Right lobe of liver (tissue), 6 donors: ENCODE measurements at regions of chr10 and their contacts with region 1.

Region 1: GRCh38 chr10:58177362-58177947 is 90.2 kb downstream of the IPMK start:
- DNase-seq: no peak
- ATAC-seq: peak; percentile 59 to 76 (median 74)
- H3K4me3 ChIP-seq: no peak overlapping the region
- H3K27ac ChIP-seq: no peak overlapping the region
- H3K4me1 ChIP-seq: no peaks in the 10 kb centered on the region
- H3K27me3 ChIP-seq: no peaks in the 10 kb centered on the region
- CTCF ChIP-seq: peak; percentile 66 to 75 (median 71)
- POLR2A ChIP-seq: no peak

Region 2: DNA sequence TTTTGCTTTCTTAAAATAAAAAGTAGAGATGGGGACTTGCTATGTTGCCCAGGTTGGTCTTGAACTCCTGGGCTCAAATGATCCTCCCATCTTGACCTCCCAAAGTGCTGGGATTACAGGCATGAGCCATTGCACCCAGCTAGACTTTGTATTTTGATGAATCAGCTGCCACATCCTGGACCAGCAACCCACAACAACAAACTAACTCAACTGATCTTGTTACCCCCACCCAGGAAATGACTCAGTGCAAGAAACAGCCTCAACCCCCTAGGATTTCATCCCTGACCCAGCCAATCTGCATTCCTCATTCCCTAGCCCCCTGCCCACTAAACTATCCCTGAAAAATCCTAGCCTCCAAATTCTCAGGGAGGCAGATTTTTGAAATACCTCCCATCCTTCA is 33.5 kb before region 1 on chr10:
- intact Hi-C with region 1: no loop called
- DNase-seq: no peak
- ATAC-seq: no peak
- H3K4me3 ChIP-seq: no peak overlapping the region
- H3K27ac ChIP-seq: no peak overlapping the region
- H3K4me1 ChIP-seq: no peaks in the 10 kb centered on the region
- H3K27me3 ChIP-seq: no peaks in the 10 kb centered on the region
- CTCF ChIP-seq: no peak
- POLR2A ChIP-seq: no peak

Region 3: DNA sequence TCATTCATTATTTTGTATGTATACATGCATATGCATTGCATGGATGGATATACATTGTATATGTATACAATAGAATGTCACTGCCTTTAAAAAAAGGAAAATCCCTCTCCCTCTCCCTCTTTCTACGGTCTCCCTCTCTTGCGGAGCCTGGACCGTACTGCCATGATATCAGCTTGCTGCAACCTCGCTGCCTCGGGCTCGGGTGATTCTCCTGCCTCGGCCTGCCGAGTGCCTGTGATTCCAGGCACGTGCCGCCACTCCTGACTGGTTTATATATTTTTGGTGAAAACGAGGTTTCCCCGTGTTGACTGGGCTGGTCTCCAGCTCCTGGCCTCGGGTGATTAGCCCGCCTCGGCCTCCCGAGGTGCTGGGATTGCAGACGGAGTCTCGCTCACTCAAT is 65.8 kb after region 1 on chr10:
- intact Hi-C with region 1: no loop called
- DNase-seq: no peak
- ATAC-seq: no peak
- H3K4me3 ChIP-seq: no peak overlapping the region
- H3K27ac ChIP-seq: no peak overlapping the region
- H3K4me1 ChIP-seq: no peaks in the 10 kb centered on the region
- H3K27me3 ChIP-seq: no peaks in the 10 kb centered on the region
- CTCF ChIP-seq: no peak
- POLR2A ChIP-seq: no peak

Region 4: DNA sequence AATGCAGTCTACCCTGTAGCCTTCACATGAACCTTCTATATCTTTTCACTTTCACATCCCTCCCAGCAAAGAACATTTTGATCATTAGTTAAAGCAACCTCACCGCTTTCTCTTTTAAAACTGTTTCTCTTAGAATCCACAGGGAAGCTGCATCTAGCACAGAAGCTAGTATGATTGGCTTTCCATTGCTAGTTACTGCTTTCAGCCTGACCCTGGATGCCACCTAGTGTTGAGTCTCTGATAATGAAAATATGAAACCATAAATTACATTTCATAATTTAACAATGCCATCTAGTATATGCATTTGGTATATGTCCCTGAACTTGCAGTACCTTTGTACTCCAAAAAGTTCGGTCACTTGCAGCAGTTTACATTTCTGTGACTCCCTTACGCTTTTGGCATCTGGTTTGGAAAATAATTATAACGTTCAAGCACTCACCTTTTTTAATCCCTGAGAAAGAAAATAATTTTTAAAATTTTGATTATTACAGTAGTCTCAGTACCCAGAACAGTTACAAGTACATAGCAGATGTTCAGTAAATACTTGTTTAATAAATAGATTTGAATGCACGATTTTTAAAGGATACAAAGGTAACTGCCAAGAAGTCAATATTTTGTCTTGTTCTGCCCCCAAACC is 114.2 kb after region 1 on chr10:
- intact Hi-C with region 1: loop called (anchors 5 to 10 kb)
- DNase-seq: no peak
- ATAC-seq: peak; percentile 84 to 95 (median 88)
- H3K4me3 ChIP-seq: no peak overlapping the region
- H3K27ac ChIP-seq: no peak overlapping the region
- H3K4me1 ChIP-seq: no peaks in the 10 kb centered on the region
- H3K27me3 ChIP-seq: no peaks in the 10 kb centered on the region
- CTCF ChIP-seq: peak; percentile 70 to 77 (median 72)
- POLR2A ChIP-seq: no peak

Region 5: DNA sequence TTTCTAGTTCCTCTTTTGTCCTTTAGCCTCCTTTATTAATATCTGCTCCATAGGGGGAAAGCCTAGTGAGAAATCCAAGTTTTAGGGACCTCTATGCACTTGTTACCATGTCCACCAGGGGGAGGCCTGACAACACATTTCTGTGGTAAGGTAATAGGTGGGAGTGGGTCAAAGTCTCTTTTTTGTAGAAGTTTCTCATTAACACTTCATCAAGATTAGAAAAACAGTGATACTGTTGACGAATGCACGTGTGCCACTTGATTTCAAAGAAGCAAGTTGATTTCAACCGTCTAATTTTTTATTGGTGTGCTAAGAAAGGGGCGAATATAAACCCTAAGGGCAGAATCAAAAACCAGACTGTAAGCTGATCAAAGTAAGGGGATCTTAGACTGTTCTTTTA is 122.1 kb after region 1 on chr10:
- intact Hi-C with region 1: loop called (anchors 5 to 10 kb)
- DNase-seq: peak in 2 of 3 donors; percentile 47 to 61
- ATAC-seq: peak; percentile 91 to 99 (median 94)
- H3K4me3 ChIP-seq: no peak overlapping the region
- H3K27ac ChIP-seq: no peak overlapping the region
- H3K4me1 ChIP-seq: no peaks in the 10 kb centered on the region
- H3K27me3 ChIP-seq: no peaks in the 10 kb centered on the region
- CTCF ChIP-seq: peak; percentile 80 to 92 (median 84)
- POLR2A ChIP-seq: no peak

Region 6: DNA sequence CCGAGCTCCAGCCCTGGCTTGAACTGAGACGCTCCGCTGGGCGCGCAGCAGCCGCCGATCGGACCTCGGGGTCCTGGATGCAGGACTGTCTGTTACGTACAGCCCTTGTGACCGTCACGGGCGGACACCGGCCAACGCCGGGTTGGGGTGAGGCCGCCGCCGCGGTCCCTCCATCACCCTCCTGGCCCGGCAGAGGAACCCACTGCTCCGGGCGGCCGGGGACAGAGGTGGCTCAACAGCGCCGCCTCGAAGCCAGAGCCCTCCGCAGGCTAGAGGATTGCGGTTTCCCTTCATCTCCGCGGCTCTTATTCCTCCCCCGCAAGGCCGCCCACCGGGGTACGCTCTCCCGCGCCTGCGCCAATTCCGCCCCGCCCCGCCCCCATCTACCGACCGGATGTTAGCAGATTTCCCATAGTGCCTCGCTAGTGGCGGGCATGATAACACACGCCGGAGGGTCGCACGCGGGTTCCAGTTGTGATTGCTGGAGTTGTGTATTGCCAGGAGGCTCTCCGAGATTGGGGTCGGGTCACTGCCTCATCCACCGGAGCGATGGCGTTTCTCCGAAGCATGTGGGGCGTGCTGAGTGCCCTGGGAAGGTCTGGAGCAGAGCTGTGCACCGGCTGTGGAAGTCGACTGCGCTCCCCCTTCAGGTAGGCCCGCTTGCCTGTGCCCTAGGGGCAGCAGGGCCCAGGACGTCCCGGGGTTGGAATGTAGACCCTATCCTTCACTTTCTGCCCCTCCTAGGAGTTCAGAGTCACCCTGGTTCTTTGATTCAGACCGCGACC is 207.7 kb after region 1 on chr10 and contains the start of gene TFAM:
- intact Hi-C with region 1: no loop called
- DNase-seq: peak; percentile 96
- ATAC-seq: peak; percentile 98 to 99 (median 98)
- H3K4me3 ChIP-seq: peak within 1 kb of the TSS; percentile 78 to 85 (median 84)
- H3K27ac ChIP-seq: peak within 1 kb of the TSS; percentile 68 to 82 (median 77)
- H3K4me1 ChIP-seq: peaks cover 0 to 13% (median 3%) of the 10 kb centered on the region in 4 donors
- H3K27me3 ChIP-seq: no peaks in the 10 kb centered on the region
- CTCF ChIP-seq: peak; percentile 55 to 68 (median 59)
- POLR2A ChIP-seq: peak; percentile 86
- total RNA-seq, gene TFAM: 15.2 to 23.0 (median 19.7) TPM